Activated naive CD4-positive, alpha-beta T cell treated with anti-CD3 and anti-CD28 coated beads for 36 hours (primary cell): ENCODE measurements at regions of chr1 and their contacts with region 1.

Region 1: DNA sequence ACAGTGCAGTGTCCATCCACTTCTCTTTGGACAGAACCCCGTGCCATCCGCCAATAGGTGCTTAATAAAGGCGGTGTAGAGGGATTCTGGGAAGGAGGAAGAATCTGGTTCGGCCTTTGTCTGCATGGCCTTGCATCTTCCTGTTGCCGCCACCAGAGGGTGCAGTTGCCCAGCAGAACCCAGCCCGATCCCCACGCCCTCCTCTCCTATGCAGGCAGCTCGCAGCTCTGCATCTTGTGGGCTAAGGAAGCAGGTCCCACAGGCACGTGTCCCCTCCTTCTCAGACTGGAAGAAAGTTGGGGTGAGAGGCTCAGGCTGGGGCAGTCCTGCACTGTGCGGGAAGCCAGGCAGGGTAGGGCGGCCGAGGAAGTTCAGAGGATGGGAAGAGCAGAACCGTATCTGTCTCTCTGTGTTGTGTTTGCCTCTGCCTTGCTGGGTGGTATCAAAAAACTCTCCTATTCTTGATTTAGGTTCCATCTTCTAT is 20.8 kb downstream of the NAV1 start:
- DNase-seq: peak; percentile 80
- H3K4me3 Mint-ChIP-seq: no peak overlapping the region
- H3K27ac Mint-ChIP-seq: no peak overlapping the region
- H3K4me1 Mint-ChIP-seq: peaks cover 3% of the 10 kb centered on the region
- H3K27me3 Mint-ChIP-seq: no peaks in the 10 kb centered on the region

Region 2: DNA sequence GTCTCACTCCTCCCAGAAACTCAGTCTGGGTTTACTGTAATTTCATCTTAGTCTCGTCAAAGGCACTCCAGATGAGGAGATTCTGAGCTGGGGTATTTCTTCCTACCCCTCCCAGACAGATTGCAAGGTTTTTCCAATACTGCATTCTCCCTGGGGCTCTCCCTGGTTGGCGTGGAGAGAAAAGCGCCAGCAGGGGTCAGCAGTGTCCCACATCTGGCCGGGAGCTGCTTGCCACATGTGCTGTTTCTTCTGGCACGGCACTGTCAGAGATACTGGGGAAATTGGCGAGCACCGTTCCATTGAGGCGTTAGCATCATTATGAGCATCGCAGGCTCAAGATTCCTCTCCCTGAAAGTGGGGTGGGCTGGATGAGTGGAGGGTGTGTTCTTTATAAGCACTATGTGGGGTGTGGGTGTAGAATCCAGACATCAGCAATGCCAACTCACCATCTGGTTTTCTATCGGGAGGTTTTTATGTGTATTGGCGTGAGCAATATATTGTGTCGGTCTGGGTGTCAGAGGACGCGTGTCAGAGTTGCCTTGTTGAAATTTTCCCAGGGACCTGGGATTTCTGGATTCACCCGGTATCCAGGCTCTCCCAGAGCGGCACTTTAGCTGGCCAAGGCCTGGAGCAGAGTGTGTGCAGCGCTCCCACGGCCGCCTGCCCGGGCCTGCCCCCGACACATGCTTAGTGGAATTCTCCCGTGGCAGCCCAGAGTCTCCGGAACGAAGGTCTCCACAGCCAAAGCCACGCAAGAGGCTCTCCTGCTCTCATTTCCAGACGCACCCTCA is 28.8 kb before region 1 on chr1:
- CTCF ChIA-PET with region 1: interaction called, 11 read pairs
- intact Hi-C with region 1: loop called (anchors 2 kb)
- DNase-seq: peak; percentile 77
- H3K4me3 Mint-ChIP-seq: no peak overlapping the region
- H3K27ac Mint-ChIP-seq: no peak overlapping the region
- H3K4me1 Mint-ChIP-seq: peaks cover 10% of the 10 kb centered on the region
- H3K27me3 Mint-ChIP-seq: no peaks in the 10 kb centered on the region

Region 3: GRCh38 chr1:201597551-201598230 is 38.0 kb after region 1 on chr1:
- CTCF ChIA-PET with region 1: interaction called, 16 read pairs
- intact Hi-C with region 1: no loop called
- DNase-seq: no peak
- H3K4me3 Mint-ChIP-seq: no peak overlapping the region
- H3K27ac Mint-ChIP-seq: no peak overlapping the region
- H3K4me1 Mint-ChIP-seq: no peaks in the 10 kb centered on the region
- H3K27me3 Mint-ChIP-seq: no peaks in the 10 kb centered on the region

Region 4: GRCh38 chr1:201703621-201704439 is 144.1 kb after region 1 on chr1:
- CTCF ChIA-PET with region 1: interaction called, 83 read pairs
- intact Hi-C with region 1: loop called (anchors 1 kb)
- DNase-seq: peak; percentile 80
- H3K4me3 Mint-ChIP-seq: no peak overlapping the region
- H3K27ac Mint-ChIP-seq: no peak overlapping the region
- H3K4me1 Mint-ChIP-seq: no peaks in the 10 kb centered on the region
- H3K27me3 Mint-ChIP-seq: no peaks in the 10 kb centered on the region

Region 5: DNA sequence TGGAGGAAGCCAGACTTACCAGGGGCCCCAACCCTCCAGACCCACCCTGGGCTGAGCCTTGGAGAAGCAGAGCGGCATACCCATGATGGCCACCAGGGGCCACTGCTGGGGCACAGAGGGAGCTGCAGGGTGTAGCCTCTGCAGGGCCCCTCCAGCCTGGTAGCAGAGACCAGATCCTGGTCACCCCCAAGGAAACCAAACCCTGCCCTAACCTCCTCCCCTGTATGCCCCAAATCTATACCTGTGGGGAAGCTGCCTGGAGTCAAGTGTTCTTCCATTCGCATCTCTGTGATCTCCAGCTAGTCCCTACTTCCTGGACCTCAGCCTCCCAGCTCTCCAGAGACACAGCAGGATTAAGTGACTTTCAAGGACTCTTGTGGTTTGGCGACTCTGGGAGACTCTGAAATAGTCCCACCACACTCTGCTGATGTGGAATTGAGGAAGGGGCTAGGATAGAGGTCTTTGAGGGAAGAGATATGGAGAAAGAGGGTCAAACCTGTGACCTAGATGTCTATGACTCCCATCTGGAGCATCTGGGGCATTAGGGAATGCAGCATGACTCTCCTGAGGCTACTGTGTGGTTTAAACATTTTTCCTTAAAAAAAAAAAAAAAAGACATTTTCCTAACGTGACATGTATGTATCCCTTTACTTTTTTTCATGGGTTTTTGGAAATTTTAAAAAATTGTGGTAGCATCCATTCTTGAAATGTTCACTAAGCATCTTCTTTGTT is 150.0 kb after region 1 on chr1:
- CTCF ChIA-PET with region 1: interaction called, 83 read pairs
- intact Hi-C with region 1: loop called (anchors 1 kb)
- DNase-seq: peak; percentile 70
- H3K4me3 Mint-ChIP-seq: no peak overlapping the region
- H3K27ac Mint-ChIP-seq: no peak overlapping the region
- H3K4me1 Mint-ChIP-seq: no peaks in the 10 kb centered on the region
- H3K27me3 Mint-ChIP-seq: no peaks in the 10 kb centered on the region

Region 6: DNA sequence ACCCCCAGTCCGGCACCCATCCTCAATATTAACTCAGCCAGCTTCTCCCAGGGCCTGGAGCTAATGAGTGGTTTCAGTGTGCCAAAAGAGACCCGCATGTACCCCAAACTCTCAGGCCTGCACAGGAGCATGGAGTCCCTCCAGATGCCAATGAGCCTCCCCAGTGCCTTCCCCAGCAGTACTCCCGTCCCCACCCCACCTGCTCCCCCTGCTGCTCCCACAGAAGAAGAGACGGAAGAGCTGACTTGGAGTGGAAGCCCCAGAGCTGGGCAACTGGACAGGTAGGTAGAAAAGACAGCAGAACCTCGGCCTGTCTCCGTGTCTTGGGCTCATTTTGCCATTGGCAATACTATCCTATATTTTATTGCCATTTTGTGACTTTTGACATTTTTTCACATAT is 223.9 kb after region 1 on chr1:
- CTCF ChIA-PET with region 1: interaction called, 10 read pairs
- intact Hi-C with region 1: no loop called
- DNase-seq: no peak
- H3K4me3 Mint-ChIP-seq: no peak overlapping the region
- H3K27ac Mint-ChIP-seq: no peak overlapping the region
- H3K4me1 Mint-ChIP-seq: no peaks in the 10 kb centered on the region
- H3K27me3 Mint-ChIP-seq: no peaks in the 10 kb centered on the region

Region 7: GRCh38 chr1:201792534-201793305 is 233.0 kb after region 1 on chr1:
- CTCF ChIA-PET with region 1: interaction called, 25 read pairs
- intact Hi-C with region 1: loop called (anchors 1 kb)
- DNase-seq: peak; percentile 74
- H3K4me3 Mint-ChIP-seq: no peak overlapping the region
- H3K27ac Mint-ChIP-seq: no peak overlapping the region
- H3K4me1 Mint-ChIP-seq: no peaks in the 10 kb centered on the region
- H3K27me3 Mint-ChIP-seq: no peaks in the 10 kb centered on the region